ENCODE measurements at regions of chr3 and their contacts with region 1.

Region 1: DNA sequence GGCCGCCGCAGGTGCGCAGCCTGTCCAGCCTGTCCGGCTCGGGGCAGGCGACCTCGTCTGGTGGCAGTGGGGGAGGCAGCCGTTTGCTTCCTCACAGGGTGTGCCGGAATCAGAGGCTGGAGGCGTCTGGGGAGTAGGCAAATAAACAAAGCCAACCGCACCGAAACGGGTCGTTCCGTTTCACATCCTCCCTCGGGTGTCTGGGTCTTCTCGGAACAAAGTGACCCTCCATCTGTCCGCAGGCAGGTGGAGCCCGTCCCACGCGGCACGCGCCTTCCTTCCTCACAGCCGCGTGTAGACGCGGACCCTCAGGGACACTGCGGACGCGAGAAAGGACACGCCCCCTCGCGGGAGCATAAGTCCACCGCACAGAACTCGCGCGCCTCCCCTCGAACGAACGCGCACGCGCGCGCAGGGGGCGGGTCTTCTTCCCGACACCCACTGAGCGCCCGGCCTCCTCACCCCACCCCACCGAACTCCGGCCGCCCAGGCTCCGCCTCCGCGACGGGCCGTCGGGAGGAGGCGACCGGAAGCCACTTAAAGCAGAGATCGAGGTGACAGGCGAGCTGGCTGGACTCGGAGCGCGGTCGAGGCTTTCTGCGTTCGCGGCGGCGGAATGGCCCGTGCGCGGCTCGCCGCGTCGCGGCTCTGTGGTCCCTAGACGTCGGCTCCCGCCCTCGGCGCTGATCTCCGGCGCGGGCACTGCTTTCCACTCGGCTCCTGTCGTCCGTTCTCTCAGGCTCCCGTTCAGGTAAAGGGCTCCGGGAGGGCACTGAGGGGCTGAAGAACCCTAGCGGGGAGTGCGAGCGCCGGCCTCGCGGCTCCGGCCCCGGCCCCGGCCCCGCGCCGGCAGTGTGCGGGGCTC is at the start of gene TIPARP:
- DNase-seq: peak; percentile 100
- H3K4me3 Mint-ChIP-seq: peak within 1 kb of the TSS; percentile 99
- H3K27ac Mint-ChIP-seq: peak within 1 kb of the TSS; percentile 99
- H3K4me1 Mint-ChIP-seq: peaks cover 46% of the 10 kb centered on the region
- H3K27me3 Mint-ChIP-seq: no peaks in the 10 kb centered on the region
- CTCF ChIP-seq: peak; percentile 89
- total RNA-seq, gene TIPARP: 84.9 and 91.4 TPM in 2 replicates

Region 2: DNA sequence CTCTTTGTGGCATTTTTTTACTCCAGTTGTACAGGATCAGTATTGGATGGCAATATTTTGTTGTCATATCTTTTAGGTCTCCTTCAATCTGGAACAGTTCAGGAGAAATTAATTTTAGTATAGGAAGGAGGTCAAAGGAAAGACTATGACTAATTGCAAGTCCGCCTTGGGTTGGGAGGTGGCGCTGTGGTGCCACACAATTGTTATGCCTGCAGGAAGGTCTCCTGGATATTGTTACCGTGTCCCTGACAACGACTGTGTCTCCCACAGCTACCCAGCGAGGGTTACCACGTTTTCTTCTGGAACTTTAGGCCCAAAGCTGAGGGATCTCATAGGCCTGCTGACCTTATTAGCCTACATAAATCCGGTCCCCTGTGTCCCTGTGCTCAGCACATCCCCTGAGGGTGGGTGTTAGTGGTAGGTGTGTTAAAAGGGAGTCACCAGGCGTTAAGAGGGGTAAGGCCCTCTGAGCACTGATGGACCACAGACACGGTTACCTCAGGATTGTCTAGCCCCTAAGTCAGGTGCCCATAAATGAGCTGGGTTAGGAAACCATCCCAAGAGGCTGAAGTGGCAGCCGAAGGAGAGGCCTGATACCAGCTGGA is 522.4 kb before region 1 on chr3:
- CTCF ChIA-PET with region 1: interaction called, 3 read pairs
- intact Hi-C with region 1: loop called (anchors 5 kb)
- DNase-seq: peak; percentile 84
- H3K4me3 Mint-ChIP-seq: no peak overlapping the region
- H3K27ac Mint-ChIP-seq: no peak overlapping the region
- H3K4me1 Mint-ChIP-seq: peaks cover 8% of the 10 kb centered on the region
- H3K27me3 Mint-ChIP-seq: peaks cover 55% of the 10 kb centered on the region
- CTCF ChIP-seq: peak; percentile 95

Region 3: DNA sequence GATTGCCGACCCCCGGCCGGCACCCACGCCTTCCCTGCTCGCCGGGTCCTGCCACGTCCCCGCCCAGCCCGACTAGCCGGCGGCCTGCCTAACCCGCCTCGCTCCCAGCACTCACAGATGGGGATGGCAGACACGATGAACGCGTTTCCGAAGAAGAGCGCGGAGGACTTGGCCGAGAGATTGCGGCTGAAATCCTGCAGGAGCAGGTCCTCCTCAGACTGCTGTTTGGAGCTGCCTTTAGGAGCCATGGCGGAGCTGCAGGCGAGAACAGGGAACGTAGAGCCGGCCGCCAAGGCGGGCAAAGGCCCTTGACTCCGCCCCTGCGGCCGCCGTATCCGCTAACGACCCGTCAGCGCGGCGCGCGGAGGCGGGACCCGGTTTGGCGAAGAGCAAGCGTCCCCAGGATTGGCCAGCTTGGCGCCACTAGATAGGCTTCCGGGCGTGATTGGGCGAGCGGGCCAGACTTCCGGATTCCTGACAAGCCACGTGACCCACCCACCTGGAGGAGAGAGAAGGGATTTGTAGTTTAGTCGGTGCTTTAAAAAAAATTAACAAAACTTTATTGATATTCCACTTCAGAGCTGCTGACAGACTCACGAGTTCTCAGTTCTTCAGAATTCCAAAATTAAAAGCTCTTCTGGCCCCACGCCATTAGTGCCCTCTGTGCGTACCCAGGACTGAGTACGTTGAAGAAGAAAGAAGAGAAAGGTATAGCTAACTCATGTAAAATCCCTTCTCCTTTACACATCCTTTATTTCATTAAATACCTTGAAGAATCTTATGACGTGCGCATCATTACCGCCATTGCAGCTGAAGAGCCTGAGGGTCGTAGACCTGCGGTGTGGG is 119.2 kb before region 1 on chr3 and contains the start of gene SSR3:
- CTCF ChIA-PET with region 1: interaction called, 30 read pairs
- intact Hi-C with region 1: loop called (anchors 5 kb)
- DNase-seq: peak; percentile 100
- H3K4me3 Mint-ChIP-seq: peak within 1 kb of the TSS; percentile 87
- H3K27ac Mint-ChIP-seq: peak within 1 kb of the TSS; percentile 90
- H3K4me1 Mint-ChIP-seq: peaks cover 43% of the 10 kb centered on the region
- H3K27me3 Mint-ChIP-seq: no peaks in the 10 kb centered on the region
- CTCF ChIP-seq: peak; percentile 68
- total RNA-seq, gene SSR3: 287 and 312 TPM in 2 replicates

Region 4: GRCh38 chr3:156691920-156692319 is 17.6 kb after region 1 on chr3:
- CTCF ChIA-PET with region 1: interaction called, 3 read pairs
- intact Hi-C with region 1: loop called (anchors 2 kb)
- DNase-seq: no peak
- H3K4me3 Mint-ChIP-seq: peak overlapping the region; percentile 56
- H3K27ac Mint-ChIP-seq: peak overlapping the region; percentile 62
- H3K4me1 Mint-ChIP-seq: peaks cover 47% of the 10 kb centered on the region
- H3K27me3 Mint-ChIP-seq: no peaks in the 10 kb centered on the region
- CTCF ChIP-seq: no peak

Region 5: DNA sequence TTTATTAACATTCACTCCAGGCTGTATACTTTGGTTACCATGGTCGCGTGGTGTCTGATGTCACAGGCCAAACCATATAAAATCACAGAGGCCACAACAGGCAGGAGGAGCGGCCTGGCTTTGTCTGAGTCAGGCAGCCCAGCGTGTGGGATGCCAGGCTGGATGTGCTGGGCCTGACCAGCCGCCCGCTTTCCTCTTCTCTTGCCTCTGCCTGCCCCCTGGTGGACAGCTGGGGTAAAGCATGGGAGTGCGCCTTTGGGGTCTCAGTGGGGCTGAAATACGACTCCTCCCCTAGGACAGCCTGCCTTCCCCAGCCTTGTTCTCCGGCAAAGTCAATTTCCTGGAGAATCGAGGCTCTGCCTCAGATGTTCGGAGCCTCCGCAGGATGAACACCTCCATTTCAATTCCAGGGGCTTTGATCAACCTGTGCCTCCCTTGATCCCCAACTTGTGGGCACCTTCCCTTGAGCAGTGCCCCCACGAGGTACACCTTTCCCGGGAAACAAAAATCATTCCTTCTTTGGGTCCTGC is 407.5 kb after region 1 on chr3:
- CTCF ChIA-PET with region 1: interaction called, 4 read pairs
- intact Hi-C with region 1: loop called (anchors 1 kb)
- DNase-seq: peak; percentile 99
- H3K4me3 Mint-ChIP-seq: no peak overlapping the region
- H3K27ac Mint-ChIP-seq: peak overlapping the region; percentile 94
- H3K4me1 Mint-ChIP-seq: peaks cover 46% of the 10 kb centered on the region
- H3K27me3 Mint-ChIP-seq: no peaks in the 10 kb centered on the region
- CTCF ChIP-seq: peak; percentile 100